Mammary epithelial cell (primary cell): ENCODE measurements at regions of chr19 and their contacts with region 1.

Region 1: DNA sequence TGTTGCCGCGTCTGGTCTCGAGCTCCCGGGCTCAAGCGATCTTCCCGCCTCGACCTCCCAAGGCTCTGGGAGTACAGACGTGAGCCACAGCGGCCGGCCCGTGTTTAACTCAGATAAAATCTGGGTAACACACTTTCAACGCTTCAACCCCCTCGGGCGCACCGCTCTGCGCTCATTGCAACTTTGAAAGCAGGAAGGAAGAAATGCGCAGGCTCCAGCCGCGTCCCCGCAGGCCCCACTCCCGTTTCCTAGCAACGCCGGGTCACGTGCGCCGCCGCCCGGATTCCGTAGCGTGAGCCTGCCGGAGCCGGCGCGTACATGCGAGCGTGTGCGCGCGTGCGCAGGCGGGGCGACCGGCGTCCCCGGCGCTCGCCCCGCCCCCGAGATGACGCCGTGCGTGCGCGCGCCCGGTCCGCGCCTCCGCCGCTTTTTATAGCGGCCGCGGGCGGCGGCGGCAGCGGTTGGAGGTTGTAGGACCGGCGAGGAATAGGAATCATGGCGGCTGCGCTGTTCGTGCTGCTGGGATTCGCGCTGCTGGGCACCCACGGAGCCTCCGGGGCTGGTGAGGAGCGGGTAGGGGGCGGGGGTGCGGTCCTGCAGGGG is at the start of gene BSG:
- DNase-seq: peak; percentile 98
- H3K4me3 ChIP-seq: peak within 1 kb of the TSS; percentile 65 to 97 (median 93)
- H3K27ac ChIP-seq: peak within 1 kb of the TSS; percentile 83
- H3K4me1 ChIP-seq: peaks cover 39% of the 10 kb centered on the region
- H3K27me3 ChIP-seq: no peaks in the 10 kb centered on the region
- CTCF ChIP-seq: no peak
- total RNA-seq, gene BSG: 493 to 593 TPM

Region 2: GRCh38 chr19:531009-531752 is 41.1 kb before region 1 on chr19:
- CTCF ChIA-PET with region 1: no interaction called
- dilution Hi-C with region 1: no loop called
- in situ Hi-C with region 1: no loop called
- intact Hi-C with region 1: loop called (anchors 1 kb)
- DNase-seq: peak; percentile 73
- H3K4me3 ChIP-seq: peak overlapping the region; percentile 71 to 94 (median 85)
- H3K27ac ChIP-seq: peak overlapping the region; percentile 60
- H3K4me1 ChIP-seq: peaks cover 29% of the 10 kb centered on the region
- H3K27me3 ChIP-seq: no peaks in the 10 kb centered on the region
- CTCF ChIP-seq: peak in 1 of 2 donors; percentile 10